GM10248 (cell line): ENCODE measurements at regions of chr3 and their contacts with region 1.

Region 1: DNA sequence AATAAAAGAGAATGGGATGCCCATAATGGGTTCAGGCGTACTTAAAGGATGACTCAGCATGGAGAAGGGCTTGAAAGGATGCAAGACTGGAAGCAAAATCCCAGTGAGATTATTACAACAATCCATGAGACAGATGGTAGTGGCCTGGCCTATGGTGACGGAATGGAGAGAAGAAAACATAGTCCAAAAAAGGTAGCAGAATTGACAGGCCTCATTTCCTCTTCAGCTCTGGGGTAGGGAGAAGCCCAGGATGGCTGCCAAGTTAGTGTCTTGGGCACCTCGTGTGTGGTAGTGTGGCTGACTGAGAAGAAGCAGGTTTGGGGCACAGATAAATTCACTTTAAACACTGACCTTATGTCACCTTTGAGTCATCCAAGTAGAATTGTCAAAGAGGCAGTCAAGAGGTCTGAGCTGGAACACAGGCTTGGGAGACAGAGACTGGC is 18.1 kb downstream of the MB21D2 start:
- DNase-seq: no peak
- CTCF ChIP-seq: no peak

Region 2: DNA sequence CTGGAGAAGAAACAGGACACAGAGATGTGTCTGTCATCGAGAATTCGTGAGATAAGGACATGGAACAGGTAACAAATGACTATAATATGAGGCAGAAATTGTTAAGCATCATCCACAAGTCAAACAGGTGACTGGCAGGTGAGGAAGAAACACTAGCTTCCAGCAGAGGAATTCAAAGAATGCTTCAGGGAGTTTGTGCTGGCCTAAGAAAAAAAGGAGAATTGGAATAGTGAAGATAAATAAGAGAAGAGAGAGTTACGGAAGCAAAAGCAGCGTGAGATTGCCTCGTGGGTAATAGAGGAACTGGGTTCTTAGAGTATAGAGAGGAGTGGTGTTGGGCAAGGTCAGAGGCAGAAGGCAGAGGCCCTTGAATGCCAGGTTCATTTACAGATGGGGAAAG is 149.4 kb before region 1 on chr3:
- CTCF ChIA-PET with region 1: no interaction called
- POLR2A ChIA-PET with region 1: no interaction called
- DNase-seq: no peak
- CTCF ChIP-seq: no peak

Region 3: GRCh38 chr3:192802957-192803899 is 96.3 kb before region 1 on chr3:
- CTCF ChIA-PET with region 1: no interaction called
- POLR2A ChIA-PET with region 1: no interaction called
- DNase-seq: peak; percentile 33
- CTCF ChIP-seq: peak; percentile 42

Region 4: GRCh38 chr3:192825657-192826200 is 73.8 kb before region 1 on chr3:
- CTCF ChIA-PET with region 1: interaction called, 12 read pairs
- POLR2A ChIA-PET with region 1: no interaction called
- DNase-seq: no peak
- CTCF ChIP-seq: peak; percentile 1

Region 5: DNA sequence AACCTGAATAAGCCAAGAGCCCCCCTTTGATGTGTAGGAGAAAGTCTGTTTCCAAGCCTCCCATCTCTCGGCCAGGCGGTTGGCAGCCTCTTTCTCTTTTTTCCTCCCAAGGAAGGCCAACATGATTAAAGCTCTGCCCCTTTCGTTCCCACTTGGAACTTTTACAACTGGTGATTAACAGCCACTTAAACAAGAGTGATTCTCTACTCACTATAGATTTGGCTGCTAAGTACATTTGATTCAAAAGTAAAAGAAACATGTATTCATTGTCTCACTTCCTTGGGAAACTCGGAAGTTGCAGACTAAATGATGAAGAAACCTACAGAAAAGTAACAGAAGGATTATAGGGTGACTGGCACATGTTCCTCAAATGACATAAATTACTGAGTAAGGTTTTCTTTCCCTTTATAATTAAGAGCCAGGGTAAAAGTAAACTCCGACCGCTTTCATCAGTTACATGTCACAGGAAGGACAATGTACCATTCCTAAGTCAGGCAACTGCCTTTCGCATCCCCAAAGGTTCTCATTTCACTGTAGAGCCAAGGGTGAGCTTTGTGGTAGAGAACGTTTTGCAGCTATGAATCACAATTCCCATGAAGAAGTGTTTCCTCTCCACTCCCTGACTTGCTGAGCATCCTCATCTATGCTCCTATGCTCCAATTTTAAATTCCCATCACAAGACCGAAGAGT is 54.6 kb before region 1 on chr3:
- CTCF ChIA-PET with region 1: interaction called, 14 read pairs
- POLR2A ChIA-PET with region 1: no interaction called
- DNase-seq: no peak
- CTCF ChIP-seq: no peak

Region 6: GRCh38 chr3:192887047-192887446 is 12.5 kb before region 1 on chr3:
- CTCF ChIA-PET with region 1: interaction called, 16 read pairs
- POLR2A ChIA-PET with region 1: no interaction called
- DNase-seq: no peak
- CTCF ChIP-seq: no peak